Left colon (tissue), 2 donors: ENCODE measurements at regions of chr1 and their contacts with region 1.

Region 1: GRCh38 chr1:204207136-204207616 is 6.6 kb downstream of the GOLT1A start:
- DNase-seq: peak; percentile 40 to 81
- ATAC-seq: peak; percentile 90

Region 2: GRCh38 chr1:204162231-204163074 is 44.7 kb before region 1 on chr1:
- intact Hi-C with region 1: loop called in 1 of 2 experiments (anchors 5 kb)
- DNase-seq: peak; percentile 73 to 85
- ATAC-seq: peak; percentile 93

Region 3: DNA sequence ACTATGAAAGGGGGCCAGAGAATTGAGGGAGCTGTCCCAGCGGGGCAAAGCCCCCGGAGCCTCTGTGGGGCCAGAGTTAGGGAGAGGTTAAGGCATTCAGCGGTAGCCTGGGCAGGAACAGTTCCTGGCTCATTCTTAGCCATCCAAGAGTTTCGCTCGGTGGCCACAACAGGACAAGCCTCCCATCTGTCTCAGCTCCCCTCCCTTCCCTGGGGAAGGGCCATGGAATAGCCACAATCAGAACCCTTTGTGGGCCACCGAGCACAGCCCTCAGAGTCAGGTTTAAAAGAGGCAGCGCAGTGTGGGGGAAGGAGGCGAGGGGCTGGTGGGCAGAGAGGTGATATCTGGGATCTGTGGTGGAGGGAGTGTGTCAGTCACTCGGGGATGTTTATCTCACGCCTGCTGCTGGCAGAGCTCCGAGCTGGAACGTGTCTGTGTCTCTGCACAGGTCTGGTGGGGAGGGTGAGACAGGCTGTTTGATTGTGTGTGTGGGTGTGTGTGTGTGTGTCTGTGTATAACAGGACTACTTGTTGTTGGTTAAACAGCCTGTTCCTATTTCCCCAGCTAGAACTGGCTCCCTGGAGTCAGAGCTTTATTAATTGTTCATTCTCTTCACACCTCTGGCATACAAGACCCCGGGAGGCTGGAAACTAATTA is 56.2 kb after region 1 on chr1:
- intact Hi-C with region 1: no loop called
- DNase-seq: no peak
- ATAC-seq: no peak

Region 4: DNA sequence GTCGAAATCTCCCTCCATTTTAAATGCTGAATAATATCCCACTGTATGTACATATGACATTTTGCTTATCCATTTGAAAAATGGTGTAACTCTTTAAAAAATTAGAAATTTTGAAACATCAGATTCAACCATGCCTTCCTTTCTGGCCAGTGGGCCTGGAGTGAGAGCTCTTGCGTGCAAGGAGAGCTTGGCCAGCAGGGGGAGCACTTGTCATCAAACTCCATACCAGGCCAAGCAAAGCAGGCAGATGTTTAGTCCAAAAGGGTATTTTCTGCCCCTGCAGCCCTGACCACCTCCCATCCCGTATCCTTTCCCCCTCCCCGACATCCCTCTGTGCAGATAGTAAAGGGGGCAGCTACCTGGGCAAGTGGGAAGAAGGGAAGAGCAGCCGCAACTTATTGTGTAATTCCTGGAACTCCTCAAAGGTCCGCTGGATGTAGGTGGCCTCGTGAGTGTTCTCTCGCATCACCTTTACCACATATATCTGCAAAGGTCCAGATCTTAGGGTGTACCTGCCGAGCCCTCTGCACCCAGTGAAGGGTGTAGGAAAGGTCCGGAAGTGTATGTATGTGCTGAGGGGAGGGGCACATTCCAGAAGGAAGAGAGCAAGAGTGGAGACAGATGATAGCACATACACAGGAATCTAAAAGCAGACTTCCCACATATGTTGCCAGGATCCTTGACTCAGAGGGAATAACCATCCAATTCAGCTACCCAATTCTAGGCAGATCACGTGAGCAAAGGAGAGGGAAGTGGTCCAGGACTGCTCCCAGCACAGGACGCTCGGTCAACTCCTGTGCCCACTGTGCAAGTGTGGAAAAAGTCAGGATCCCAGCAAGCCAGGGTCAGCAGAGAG is 224.4 kb after region 1 on chr1:
- intact Hi-C with region 1: no loop called
- DNase-seq: peak; percentile 68 to 91
- ATAC-seq: peak; percentile 80